Left colon (tissue), 2 donors: ENCODE measurements at regions of chr10 and their contacts with region 1.

Region 1: DNA sequence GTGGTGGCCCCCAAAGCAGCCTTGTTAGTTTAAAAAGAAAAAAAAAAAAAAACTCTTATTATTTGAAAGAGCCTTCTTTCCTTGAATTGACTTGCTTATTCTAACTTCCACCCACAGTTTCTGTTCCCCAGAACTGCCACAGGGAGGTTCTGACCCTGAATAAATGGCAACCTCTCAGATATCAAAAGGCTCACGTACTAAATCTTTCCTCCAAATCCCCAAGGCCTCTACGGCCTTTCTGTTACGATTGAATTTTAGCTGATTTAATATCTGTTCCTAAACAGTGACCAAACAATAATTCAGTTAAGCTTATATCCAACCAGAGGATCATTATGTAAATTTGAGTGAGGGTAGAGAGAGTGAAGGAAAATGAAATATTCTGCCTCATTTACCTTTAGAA is 482.8 kb downstream of the GFRA1 start:
- DNase-seq: no peak
- ATAC-seq: no peak

Region 2: GRCh38 chr10:116287906-116288501 is 497.8 kb after region 1 on chr10:
- intact Hi-C with region 1: loop called (anchors 10 kb)
- DNase-seq: peak in 1 of 2 donors; percentile 6
- ATAC-seq: no peak

Region 3: GRCh38 chr10:116296291-116296721 is 506.1 kb after region 1 on chr10:
- intact Hi-C with region 1: loop called in 1 of 2 experiments (anchors 10 kb)
- DNase-seq: no peak
- ATAC-seq: no peak